Prostate gland (tissue), 2 donors: ENCODE measurements at regions of chr11 and their contacts with region 1.

Region 1: GRCh38 chr11:77994412-77995362 is at the start of gene INTS4:
- DNase-seq: peak; percentile 99
- H3K4me3 ChIP-seq: peak within 1 kb of the TSS; percentile 47 to 55
- H3K27ac ChIP-seq: peak within 1 kb of the TSS; percentile 68 to 70
- H3K4me1 ChIP-seq: peaks cover 7% of the 10 kb centered on the region
- H3K27me3 ChIP-seq: no peaks in the 10 kb centered on the region
- CTCF ChIP-seq: peak in 1 of 4 experiments; percentile 11
- POLR2A ChIP-seq: peak; percentile 30
- total RNA-seq, gene INTS4: 30.1 to 31.0 TPM

Region 2: DNA sequence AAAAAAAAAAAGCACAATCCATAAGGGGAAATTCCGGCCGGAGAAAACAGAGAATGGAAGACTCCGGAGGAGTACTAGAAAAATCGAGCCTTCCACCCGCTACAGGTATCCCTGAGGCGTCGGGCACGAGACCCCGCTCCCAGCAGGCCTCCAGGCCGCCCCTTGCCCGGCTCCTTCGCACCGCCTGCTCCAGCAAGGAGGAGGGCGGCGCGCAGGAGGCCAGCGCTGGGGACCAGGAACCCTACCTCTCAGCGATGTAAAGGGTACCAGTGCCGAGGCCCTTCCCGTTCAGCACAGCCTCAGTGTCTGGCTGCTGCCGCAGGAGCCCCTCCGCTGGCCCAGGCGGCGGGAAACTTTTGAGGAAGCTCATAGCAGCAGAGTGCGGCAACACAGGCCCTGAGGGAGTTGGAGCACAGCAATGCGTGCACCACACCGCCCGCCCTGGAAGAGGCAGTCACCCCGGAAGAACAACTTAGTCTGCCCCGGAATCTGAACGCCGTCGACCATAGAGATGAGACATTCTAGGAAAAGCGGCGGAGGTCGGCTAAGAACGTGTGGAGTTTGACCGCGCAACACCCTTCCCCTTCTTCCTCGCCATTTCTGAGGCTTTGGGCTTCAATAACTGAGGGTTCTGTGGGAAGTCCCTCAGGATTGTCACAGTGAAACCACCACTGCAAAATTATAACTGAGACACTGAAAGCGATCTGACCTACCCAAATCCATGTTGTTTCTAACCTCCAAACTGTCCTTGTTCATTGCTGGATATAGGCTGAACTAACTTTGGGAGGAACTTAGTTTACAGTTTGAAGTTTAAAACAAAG is 357.1 kb before region 1 on chr11 and contains the start of gene CLNS1A:
- intact Hi-C with region 1: loop called (anchors 5 kb)
- DNase-seq: peak; percentile 85
- H3K4me3 ChIP-seq: peak within 1 kb of the TSS; percentile 85 to 94
- H3K27ac ChIP-seq: peak within 1 kb of the TSS; percentile 65 to 76
- H3K4me1 ChIP-seq: no peaks in the 10 kb centered on the region
- H3K27me3 ChIP-seq: no peaks in the 10 kb centered on the region
- CTCF ChIP-seq: peak in 1 of 4 experiments; percentile 20
- POLR2A ChIP-seq: no peak
- total RNA-seq, gene CLNS1A: 37.8 to 99.0 TPM

Region 3: GRCh38 chr11:78045851-78046485 is 51.3 kb after region 1 on chr11:
- intact Hi-C with region 1: loop called (anchors 10 kb)
- DNase-seq: peak; percentile 70
- H3K4me3 ChIP-seq: peak overlapping the region; percentile 28 to 30
- H3K27ac ChIP-seq: peak overlapping the region; percentile 21 to 64
- H3K4me1 ChIP-seq: no peaks in the 10 kb centered on the region
- H3K27me3 ChIP-seq: no peaks in the 10 kb centered on the region
- CTCF ChIP-seq: peak; percentile 89 to 97 (median 96)
- POLR2A ChIP-seq: no peak

Region 4: DNA sequence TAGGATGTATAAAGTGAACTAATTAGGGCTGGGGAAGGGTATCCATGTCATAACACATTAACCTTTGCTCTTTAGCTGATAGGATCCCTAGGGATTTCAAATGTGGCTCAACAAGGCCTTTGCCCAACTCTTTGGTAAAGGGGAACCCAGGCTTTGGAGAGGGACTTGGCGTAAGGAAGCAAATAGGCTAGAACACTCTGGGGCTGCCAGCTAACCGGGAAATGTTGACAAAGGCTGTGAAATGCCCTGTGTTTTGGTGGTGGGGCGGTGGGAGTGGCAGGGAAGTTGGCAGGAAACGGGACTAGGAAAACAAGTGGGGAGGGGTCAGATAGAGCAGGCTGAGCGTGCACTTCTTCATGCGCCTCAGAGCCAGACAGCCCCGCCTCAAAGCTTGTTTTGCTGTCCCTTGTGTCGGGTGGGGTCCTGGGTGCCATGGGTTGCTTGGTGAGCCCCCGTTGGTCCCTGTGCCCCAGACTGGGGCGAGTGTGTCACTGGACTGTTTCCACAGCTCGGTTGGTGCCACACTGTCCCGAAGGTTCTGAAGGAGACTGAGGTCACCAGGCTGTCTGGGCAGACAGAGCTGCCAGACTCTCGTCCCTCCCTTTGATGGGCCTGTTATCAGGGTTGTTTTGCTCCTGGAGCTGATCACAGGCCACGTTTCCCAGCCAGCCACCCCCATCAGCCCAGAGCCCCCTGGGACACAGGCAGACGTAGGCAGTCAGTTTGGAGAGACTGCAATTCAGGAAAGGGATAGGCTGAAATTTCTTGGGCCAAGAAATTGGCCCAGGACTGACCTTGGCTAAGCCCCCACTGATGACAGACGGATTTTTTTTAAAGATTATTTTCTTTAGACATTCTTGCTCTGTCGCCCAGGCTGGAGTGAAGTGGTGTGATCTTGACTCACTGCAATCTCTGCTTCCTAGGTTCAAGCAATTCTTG is 174.1 kb after region 1 on chr11:
- intact Hi-C with region 1: no loop called
- DNase-seq: peak; percentile 8
- H3K4me3 ChIP-seq: no peak overlapping the region
- H3K27ac ChIP-seq: peak overlapping the region; percentile 68 to 69
- H3K4me1 ChIP-seq: no peaks in the 10 kb centered on the region
- H3K27me3 ChIP-seq: no peaks in the 10 kb centered on the region
- CTCF ChIP-seq: no peak
- POLR2A ChIP-seq: no peak